CD4-positive, alpha-beta T cell (primary cell): ENCODE measurements at regions of chr2 and their contacts with region 1.

Region 1: DNA sequence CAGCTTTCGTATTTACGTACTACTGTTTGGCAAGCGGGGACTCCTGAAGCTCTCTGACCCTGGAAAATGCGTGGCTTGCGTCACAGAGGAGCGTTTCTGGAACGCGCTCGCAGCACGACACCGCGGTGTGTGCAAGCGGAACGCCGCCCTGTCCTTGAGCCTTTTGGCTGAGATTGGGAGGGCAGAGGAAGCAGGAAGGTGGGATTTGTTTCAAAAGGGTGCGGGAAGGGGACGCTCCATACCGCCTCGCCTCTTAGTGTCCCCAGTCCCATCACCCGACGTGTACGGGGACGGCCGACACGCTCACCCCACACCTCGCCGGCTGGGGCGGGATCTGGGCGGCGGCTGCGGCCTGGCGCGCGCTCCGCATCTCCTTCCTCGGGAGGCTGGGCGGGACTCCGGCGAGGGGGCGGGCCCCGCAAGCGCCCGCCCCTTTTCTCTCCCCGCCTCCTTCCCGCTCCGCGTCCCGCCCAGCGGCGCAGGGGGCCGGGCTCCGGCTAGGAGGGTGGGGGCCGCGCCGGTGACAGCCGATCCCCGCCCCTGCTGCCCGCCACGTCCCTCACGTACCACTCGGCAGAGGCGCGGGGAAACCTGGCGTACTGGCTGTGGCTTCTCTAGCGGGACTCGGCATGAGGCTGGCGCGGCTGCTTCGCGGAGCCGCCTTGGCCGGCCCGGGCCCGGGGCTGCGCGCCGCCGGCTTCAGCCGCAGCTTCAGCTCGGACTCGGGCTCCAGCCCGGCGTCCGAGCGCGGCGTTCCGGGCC is at the start of gene PDK1:
- DNase-seq: peak; percentile 81 to 97 (median 90)
- ATAC-seq: peak; percentile 92
- H3K4me3 ChIP-seq: peak within 1 kb of the TSS; percentile 71
- H3K4me3 Mint-ChIP-seq: peak within 1 kb of the TSS; percentile 97
- H3K27ac ChIP-seq: peak within 1 kb of the TSS; percentile 47 to 86
- H3K27ac Mint-ChIP-seq: peak within 1 kb of the TSS; percentile 92
- H3K4me1 ChIP-seq: peaks cover 21% of the 10 kb centered on the region
- H3K4me1 Mint-ChIP-seq: peaks cover 61% of the 10 kb centered on the region
- H3K27me3 ChIP-seq: no peaks in the 10 kb centered on the region
- H3K27me3 Mint-ChIP-seq: no peaks in the 10 kb centered on the region
- CTCF ChIP-seq: no peak
- total RNA-seq, gene PDK1: 30.0 to 31.1 TPM

Region 2: GRCh38 chr2:171687287-171688128 is 868.2 kb before region 1 on chr2 and contains the start of gene DYNC1I2:
- CTCF ChIA-PET with region 1: no interaction called
- POLR2A ChIA-PET with region 1: no interaction called
- intact Hi-C with region 1: loop called in 1 of 2 experiments (anchors 10 kb)
- DNase-seq: peak; percentile 44 to 86 (median 60)
- ATAC-seq: peak; percentile 81
- H3K4me3 ChIP-seq: peak within 1 kb of the TSS; percentile 97
- H3K4me3 Mint-ChIP-seq: peak within 1 kb of the TSS; percentile 96
- H3K27ac ChIP-seq: peak within 1 kb of the TSS; percentile 49 to 52
- H3K27ac Mint-ChIP-seq: peak within 1 kb of the TSS; percentile 82
- H3K4me1 ChIP-seq: peaks cover 8% of the 10 kb centered on the region
- H3K4me1 Mint-ChIP-seq: peaks cover 36% of the 10 kb centered on the region
- H3K27me3 ChIP-seq: no peaks in the 10 kb centered on the region
- H3K27me3 Mint-ChIP-seq: no peaks in the 10 kb centered on the region
- CTCF ChIP-seq: no peak
- total RNA-seq, gene DYNC1I2: 10.5 to 11.6 TPM

Region 3: GRCh38 chr2:171922230-171923022 is 633.3 kb before region 1 on chr2 and contains the start of gene HAT1:
- CTCF ChIA-PET with region 1: no interaction called
- POLR2A ChIA-PET with region 1: interaction called, 3 read pairs
- intact Hi-C with region 1: loop called (anchors 2 kb)
- DNase-seq: peak; percentile 94 to 99 (median 96)
- ATAC-seq: peak; percentile 95
- H3K4me3 ChIP-seq: peak within 1 kb of the TSS; percentile 93
- H3K4me3 Mint-ChIP-seq: peak within 1 kb of the TSS; percentile 100
- H3K27ac ChIP-seq: peak within 1 kb of the TSS; percentile 83 to 96
- H3K27ac Mint-ChIP-seq: peak within 1 kb of the TSS; percentile 93
- H3K4me1 ChIP-seq: peaks cover 18% of the 10 kb centered on the region
- H3K4me1 Mint-ChIP-seq: peaks cover 47% of the 10 kb centered on the region
- H3K27me3 ChIP-seq: no peaks in the 10 kb centered on the region
- H3K27me3 Mint-ChIP-seq: no peaks in the 10 kb centered on the region
- CTCF ChIP-seq: no peak
- total RNA-seq, gene HAT1: 20.3 to 22.6 TPM

Region 4: GRCh38 chr2:172095146-172095904 is 460.4 kb before region 1 on chr2:
- CTCF ChIA-PET with region 1: no interaction called
- POLR2A ChIA-PET with region 1: no interaction called
- intact Hi-C with region 1: loop called in 1 of 2 experiments (anchors 10 kb)
- DNase-seq: peak; percentile 55 to 91 (median 71)
- ATAC-seq: peak; percentile 86
- H3K4me3 ChIP-seq: peak overlapping the region; percentile 57
- H3K4me3 Mint-ChIP-seq: peak overlapping the region; percentile 91
- H3K27ac ChIP-seq: no peak overlapping the region
- H3K27ac Mint-ChIP-seq: peak overlapping the region; percentile 76
- H3K4me1 ChIP-seq: peaks cover 75% of the 10 kb centered on the region
- H3K4me1 Mint-ChIP-seq: peaks cover 31% of the 10 kb centered on the region
- H3K27me3 ChIP-seq: peaks cover 93 to 97% of the 10 kb centered on the region in 2 experiments
- H3K27me3 Mint-ChIP-seq: peaks cover 76% of the 10 kb centered on the region
- CTCF ChIP-seq: no peak

Region 5: GRCh38 chr2:172380436-172381274 is 175.0 kb before region 1 on chr2:
- CTCF ChIA-PET with region 1: no interaction called
- POLR2A ChIA-PET with region 1: no interaction called
- intact Hi-C with region 1: no loop called
- DNase-seq: peak in 3 of 14 experiments; percentile 6 to 35 (median 26)
- ATAC-seq: no peak
- H3K4me3 ChIP-seq: no peak overlapping the region
- H3K4me3 Mint-ChIP-seq: no peak overlapping the region
- H3K27ac ChIP-seq: no peak overlapping the region
- H3K27ac Mint-ChIP-seq: no peak overlapping the region
- H3K4me1 ChIP-seq: no peaks in the 10 kb centered on the region
- H3K4me1 Mint-ChIP-seq: no peaks in the 10 kb centered on the region
- H3K27me3 ChIP-seq: no peaks in the 10 kb centered on the region
- H3K27me3 Mint-ChIP-seq: no peaks in the 10 kb centered on the region
- CTCF ChIP-seq: no peak

Region 6: GRCh38 chr2:172496160-172496608 is 59.5 kb before region 1 on chr2:
- CTCF ChIA-PET with region 1: interaction called, 3 read pairs
- POLR2A ChIA-PET with region 1: interaction called, 54 read pairs
- intact Hi-C with region 1: loop called (anchors 1 to 2 kb)
- DNase-seq: peak; percentile 17 to 81 (median 51)
- ATAC-seq: peak; percentile 96
- H3K4me3 ChIP-seq: no peak overlapping the region
- H3K4me3 Mint-ChIP-seq: peak overlapping the region; percentile 83
- H3K27ac ChIP-seq: peak overlapping the region; percentile 63 to 73
- H3K27ac Mint-ChIP-seq: peak overlapping the region; percentile 95
- H3K4me1 ChIP-seq: peaks cover 49% of the 10 kb centered on the region
- H3K4me1 Mint-ChIP-seq: peaks cover 81% of the 10 kb centered on the region
- H3K27me3 ChIP-seq: no peaks in the 10 kb centered on the region
- H3K27me3 Mint-ChIP-seq: no peaks in the 10 kb centered on the region
- CTCF ChIP-seq: no peak